OCI-LY7 (cell line): ENCODE measurements at regions of chr1 and their contacts with region 1.

Region 1: DNA sequence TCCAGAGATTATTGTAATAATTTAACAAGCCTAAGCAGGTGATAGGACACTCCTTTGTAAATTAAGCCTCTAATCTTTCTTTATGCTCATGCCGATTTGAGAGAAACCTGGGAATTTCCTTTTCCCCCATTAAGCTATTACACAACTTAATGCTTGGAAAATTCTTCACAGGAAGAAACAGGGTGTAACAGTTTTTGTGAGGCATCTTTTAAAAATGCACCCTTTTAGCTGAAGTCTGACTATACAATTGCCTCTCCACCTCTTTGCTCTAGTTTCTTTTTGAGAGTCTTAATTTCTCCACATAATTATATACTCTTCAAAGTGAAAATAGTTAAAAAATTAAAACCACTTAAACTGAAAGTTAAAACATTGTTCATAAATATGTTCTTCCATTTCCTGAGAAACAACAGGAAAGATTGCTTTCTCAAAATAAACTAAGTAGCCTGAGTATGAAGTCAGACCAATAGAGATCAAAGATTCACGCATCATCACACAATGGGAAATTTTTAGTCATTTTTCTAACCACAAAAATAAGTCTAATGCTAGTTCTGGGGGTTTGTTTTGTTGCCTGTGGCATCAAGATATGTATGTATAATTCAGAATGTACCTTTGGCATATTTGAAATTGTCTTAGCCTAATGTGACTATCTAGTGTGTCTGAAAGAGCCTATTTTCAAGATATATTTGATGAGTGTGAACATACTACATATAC is 34.7 kb downstream of the LRRC8D start:
- DNase-seq: no peak
- H3K4me3 ChIP-seq: peak overlapping the region; percentile 12
- H3K27ac ChIP-seq: no peak overlapping the region
- H3K4me1 ChIP-seq: peaks cover 23% of the 10 kb centered on the region
- CTCF ChIP-seq: no peak

Region 2: GRCh38 chr1:89578151-89578550 is 277.4 kb before region 1 on chr1:
- CTCF ChIA-PET with region 1: no interaction called
- POLR2A ChIA-PET with region 1: no interaction called
- intact Hi-C with region 1: no loop called
- DNase-seq: no peak
- H3K4me3 ChIP-seq: no peak overlapping the region
- H3K27ac ChIP-seq: no peak overlapping the region
- H3K4me1 ChIP-seq: peaks cover 6% of the 10 kb centered on the region
- CTCF ChIP-seq: no peak

Region 3: DNA sequence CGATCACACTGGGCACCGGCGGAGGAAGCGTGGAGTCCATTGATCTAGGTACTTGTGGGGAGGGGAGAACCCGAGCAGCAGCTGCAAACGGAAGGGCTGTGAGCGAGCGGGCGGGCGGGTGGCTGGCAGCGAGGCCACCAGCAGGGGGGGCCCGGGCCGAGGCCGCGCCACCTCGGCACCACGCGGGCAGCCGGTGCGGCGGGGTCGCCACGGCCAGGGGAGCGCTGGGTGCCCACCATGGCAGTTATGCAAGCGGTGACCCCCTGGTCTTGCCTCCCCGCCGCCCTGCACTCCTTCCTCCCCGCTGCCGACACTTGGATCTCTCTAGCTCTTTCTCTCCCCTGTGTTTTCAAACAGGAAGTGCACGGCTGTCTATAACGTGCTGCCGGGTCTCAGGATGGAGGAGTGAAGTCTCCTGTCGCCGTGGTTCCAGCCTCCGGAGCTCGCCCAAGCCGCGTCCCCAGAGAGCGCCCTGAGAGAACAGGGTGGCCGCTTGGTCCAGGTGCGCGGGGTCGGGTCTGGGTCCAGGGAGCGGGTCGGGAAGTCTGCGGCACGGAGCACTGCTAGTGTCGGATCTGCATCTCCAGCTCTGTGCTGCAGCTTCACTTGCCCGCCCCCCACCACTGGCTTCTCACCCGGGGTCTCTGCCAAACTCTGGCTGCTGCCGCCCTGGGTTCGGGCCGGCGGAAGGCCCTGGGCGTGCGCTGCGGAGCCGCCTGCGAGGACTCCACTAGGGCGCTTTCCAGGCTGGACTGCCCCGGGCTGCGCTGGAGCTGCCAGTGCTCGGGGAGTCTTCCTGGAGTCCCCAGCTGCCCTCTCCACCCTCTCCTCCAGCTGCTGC is 12.1 kb before region 1 on chr1:
- CTCF ChIA-PET with region 1: interaction called, 3 read pairs
- POLR2A ChIA-PET with region 1: interaction called, 13 read pairs
- intact Hi-C with region 1: no loop called
- DNase-seq: peak; percentile 85
- H3K4me3 ChIP-seq: peak overlapping the region; percentile 87
- H3K27ac ChIP-seq: peak overlapping the region; percentile 52
- H3K4me1 ChIP-seq: peaks cover 41% of the 10 kb centered on the region
- CTCF ChIP-seq: peak; percentile 80